Activated naive CD8-positive, alpha-beta T cell treated with anti-CD3 and anti-CD28 coated beads, Interleukin-2, amount 10 ng/mL, durations not matched to agents 7 days and 5 days (primary cell): ENCODE measurements at regions of chr10 and their contacts with region 1.

Region 1: GRCh38 chr10:93702211-93703001 is at the start of gene FRA10AC1:
- DNase-seq: peak; percentile 92
- ATAC-seq: peak; percentile 88
- H3K4me3 Mint-ChIP-seq: no peak within 1 kb of the TSS
- H3K27ac Mint-ChIP-seq: no peak within 1 kb of the TSS
- H3K4me1 Mint-ChIP-seq: peaks cover 6% of the 10 kb centered on the region
- H3K27me3 Mint-ChIP-seq: no peaks in the 10 kb centered on the region
- total RNA-seq, gene FRA10AC1: 13.3 to 15.5 TPM

Region 2: DNA sequence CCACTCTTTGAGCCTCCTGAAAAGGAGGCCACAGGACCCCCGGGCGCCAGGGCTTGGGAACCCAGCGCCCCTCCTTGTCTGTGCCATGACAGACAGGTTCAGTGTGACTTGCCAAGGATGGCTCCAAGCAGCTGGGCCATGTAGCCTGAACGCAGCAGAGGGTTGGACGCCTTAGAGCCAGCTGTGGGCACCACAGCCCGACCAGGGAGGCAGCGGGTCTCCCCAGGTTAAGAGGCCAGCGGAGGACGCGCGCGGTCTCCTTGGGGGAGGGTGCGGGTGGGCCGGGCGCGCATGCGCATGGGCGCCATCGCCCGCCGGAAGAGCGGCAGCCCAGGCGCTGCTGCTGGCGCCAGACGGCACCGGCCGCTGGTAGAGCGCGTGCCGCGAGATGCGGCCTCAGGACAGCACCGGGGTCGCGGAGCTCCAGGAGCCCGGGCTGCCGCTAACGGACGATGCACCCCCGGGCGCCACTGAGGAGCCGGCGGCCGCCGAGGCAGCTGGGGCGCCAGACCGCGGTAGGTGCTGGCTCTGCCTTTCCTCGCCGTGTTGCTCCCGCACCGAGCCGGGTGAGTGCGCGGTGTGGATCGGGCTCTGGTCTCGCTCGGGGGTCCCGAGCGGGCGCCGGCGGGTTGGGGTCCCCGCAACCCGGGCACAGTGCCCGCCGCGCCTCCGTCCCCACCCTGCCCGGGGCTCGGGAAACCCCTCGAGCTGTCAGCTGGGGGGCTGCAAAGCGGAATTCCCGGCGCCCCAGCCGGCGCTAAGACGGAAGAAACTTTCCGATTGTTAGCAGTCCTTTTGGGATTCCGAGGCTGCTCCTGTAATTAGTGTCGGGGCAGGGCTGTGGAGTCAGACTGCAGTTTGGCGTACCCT is 191.5 kb after region 1 on chr10 and contains the start of gene SLC35G1:
- POLR2A ChIA-PET with region 1: interaction called, 11 read pairs
- DNase-seq: peak; percentile 82
- ATAC-seq: peak; percentile 93
- H3K4me3 Mint-ChIP-seq: peak within 1 kb of the TSS; percentile 83
- H3K27ac Mint-ChIP-seq: peak within 1 kb of the TSS; percentile 75
- H3K4me1 Mint-ChIP-seq: peaks cover 33% of the 10 kb centered on the region
- H3K27me3 Mint-ChIP-seq: peaks cover 7% of the 10 kb centered on the region
- total RNA-seq, gene SLC35G1: 3.4 to 3.9 TPM